RWPE1 (cell line): ENCODE measurements at regions of chr16 and their contacts with region 1.

Region 1: GRCh38 chr16:82229796-82230619 is 60.0 kb upstream of the MPHOSPH6 start:
- DNase-seq: peak; percentile 60
- H3K27ac ChIP-seq: no peak overlapping the region
- CTCF ChIP-seq: peak; percentile 91

Region 2: DNA sequence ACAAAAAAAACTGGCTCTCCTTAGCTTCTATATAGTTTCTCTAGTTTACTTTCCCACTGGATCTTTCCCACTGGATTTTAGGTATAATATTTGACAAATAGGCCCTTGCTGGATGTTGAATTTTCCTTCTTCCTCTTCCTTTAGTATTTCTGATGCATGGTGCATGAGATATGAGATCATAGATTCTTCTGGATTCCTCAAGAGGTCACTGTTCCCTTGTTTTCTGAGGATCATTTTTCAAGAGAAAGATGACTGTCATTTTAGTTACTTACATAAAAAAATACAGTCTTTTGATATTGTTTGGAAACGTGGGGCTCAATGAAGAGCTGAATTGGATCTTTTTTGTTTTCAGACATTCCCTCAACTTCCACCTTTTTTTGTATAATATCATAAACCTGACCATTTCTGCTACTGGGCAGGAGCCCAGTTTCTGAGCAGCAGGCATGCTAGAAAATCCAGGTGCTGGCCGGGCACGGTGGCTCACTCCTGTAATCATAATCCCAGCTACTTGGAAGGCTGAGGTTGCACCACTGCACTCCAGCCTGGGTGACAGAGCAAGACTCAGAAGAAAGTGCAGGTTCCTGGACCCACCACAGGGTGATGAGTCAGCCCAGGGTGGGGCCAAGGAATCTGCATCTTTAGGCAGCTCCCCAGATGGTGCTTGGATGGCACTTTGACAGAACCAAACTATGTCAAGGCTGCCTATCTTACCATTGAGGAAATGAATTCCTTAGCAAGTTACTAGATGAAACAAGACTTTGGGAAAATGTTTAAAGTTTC is 289.0 kb before region 1 on chr16:
- CTCF ChIA-PET with region 1: interaction called, 10 read pairs
- POLR2A ChIA-PET with region 1: no interaction called
- DNase-seq: peak; percentile 55
- H3K27ac ChIP-seq: peak overlapping the region; percentile 56
- CTCF ChIP-seq: peak; percentile 62

Region 3: GRCh38 chr16:82031116-82032084 is 198.6 kb before region 1 on chr16:
- CTCF ChIA-PET with region 1: interaction called, 21 read pairs
- POLR2A ChIA-PET with region 1: no interaction called
- DNase-seq: peak; percentile 63
- H3K27ac ChIP-seq: no peak overlapping the region
- CTCF ChIP-seq: peak; percentile 53

Region 4: GRCh38 chr16:82219298-82219697 is 10.7 kb before region 1 on chr16:
- CTCF ChIA-PET with region 1: interaction called, 10 read pairs
- POLR2A ChIA-PET with region 1: no interaction called
- DNase-seq: no peak
- H3K27ac ChIP-seq: no peak overlapping the region
- CTCF ChIP-seq: no peak